BJ (cell line): ENCODE measurements at regions of chr2 and their contacts with region 1.

Region 1: DNA sequence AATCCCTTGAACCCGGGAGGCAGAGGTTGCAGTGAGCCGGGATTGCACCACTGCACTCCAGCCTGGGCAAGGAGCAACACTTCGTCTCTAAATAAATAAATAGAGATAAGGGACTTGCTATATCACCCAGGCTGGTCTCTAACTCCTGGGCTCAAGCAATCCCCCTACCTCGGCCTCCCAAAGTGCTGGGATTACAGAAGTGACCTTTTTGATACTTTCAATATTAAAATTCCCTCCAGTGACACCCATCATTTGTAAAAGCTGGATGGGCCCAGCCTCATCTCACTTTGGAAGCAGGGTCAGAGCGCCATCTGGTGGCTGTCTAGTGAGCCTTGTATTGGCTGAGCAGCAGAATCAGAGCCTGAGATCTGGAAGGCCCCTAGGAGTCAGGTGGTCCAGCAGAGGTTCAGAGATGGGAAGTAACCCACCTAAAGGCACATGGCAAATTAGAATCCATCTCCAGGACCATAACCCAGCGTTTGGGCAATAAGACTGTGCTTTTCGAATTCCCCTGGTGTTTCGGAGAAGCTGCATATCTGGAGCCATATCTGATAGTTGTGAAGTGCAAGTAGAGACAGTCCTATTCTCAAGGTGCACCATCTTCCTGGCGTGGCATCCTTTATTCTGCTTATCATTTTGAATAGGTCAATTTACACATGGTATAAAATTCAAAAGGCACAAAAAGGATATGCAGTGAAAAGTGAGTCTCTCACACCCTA is 18.3 kb upstream of the SLC35F6 start:
- DNase-seq: no peak
- H3K4me3 ChIP-seq: no peak overlapping the region
- H3K27me3 ChIP-seq: no peaks in the 10 kb centered on the region; the same call in 1 of the 2 replicates
- CTCF ChIP-seq: peak; percentile 90

Region 2: GRCh38 chr2:26577434-26578112 is 168.2 kb before region 1 on chr2:
- CTCF ChIA-PET with region 1: interaction called, 14 read pairs
- POLR2A ChIA-PET with region 1: no interaction called
- DNase-seq: no peak
- H3K4me3 ChIP-seq: no peak overlapping the region
- H3K27me3 ChIP-seq: peaks cover 23% of the 10 kb centered on the region
- CTCF ChIP-seq: peak; percentile 98

Region 3: GRCh38 chr2:26598336-26598995 is 147.3 kb before region 1 on chr2:
- CTCF ChIA-PET with region 1: interaction called, 552 read pairs
- POLR2A ChIA-PET with region 1: no interaction called
- DNase-seq: no peak
- H3K4me3 ChIP-seq: no peak overlapping the region
- H3K27me3 ChIP-seq: peaks cover 16% of the 10 kb centered on the region
- CTCF ChIP-seq: no peak

Region 4: DNA sequence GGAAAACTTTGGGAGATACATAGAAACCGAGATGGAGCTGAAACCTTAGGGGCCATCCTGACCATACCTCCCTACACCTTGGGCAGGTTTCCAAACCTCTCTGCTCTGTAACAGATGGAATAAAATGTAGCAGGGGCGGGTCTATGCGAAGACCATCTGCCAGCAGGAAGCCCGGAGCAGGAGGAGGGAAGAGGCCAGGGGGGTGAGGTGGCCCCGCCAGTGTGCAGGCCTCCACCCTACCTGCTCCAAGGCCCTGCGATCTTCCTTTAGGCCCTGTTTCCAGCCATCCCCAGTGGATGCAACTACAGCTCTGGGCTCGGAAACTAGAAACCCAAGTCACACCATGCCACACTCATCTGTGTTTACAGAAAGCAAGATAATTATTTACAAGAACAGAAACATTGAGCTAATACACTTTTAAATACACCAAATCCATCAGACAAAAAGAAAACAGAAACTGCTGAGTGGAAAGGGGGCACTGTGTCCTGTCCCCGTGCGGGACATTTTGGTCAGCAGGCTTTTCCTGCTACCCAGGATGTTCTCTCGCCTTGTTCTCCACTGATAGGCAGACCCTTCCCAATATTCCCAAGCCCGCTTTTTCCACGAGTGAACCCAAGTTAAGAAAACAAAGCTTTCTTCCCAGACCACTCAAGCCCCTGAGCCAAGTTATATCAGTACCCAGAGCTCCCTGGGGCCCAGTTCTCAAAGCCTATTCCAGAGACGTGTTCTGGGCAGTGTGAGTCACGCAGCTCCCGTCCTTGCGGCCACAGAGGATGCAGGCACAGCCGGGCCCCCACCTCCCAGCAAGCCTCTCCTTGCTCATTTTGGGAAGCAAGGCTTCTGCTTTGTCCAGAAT is 122.0 kb before region 1 on chr2:
- CTCF ChIA-PET with region 1: interaction called, 21 read pairs
- POLR2A ChIA-PET with region 1: no interaction called
- DNase-seq: no peak
- H3K4me3 ChIP-seq: no peak overlapping the region
- H3K27me3 ChIP-seq: peaks cover 11% of the 10 kb centered on the region; the same call in 1 of the 2 replicates
- CTCF ChIP-seq: no peak

Region 5: DNA sequence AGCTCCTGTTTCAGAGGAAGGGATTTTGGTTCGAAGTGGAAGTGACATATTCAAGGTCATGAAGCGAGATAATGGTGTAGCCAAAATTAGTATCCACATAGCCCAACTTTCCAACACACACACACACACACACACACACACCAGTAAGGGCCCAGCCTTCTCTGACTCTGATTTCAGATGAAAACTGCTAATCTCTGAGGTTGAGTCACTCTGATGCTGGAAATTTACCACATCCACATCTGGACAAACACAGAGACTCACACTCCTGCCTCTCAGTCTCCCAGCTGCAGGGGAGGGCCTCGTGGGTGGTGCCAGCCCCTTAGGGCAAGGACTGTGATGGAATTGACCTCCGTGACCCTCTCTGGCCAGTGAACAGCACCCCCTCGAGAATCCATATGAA is 10.7 kb before region 1 on chr2:
- CTCF ChIA-PET with region 1: interaction called, 30 read pairs
- POLR2A ChIA-PET with region 1: no interaction called
- DNase-seq: peak; percentile 58
- H3K4me3 ChIP-seq: no peak overlapping the region
- H3K27me3 ChIP-seq: no peaks in the 10 kb centered on the region; the same call in none of the 2 replicates
- CTCF ChIP-seq: no peak